BJ (cell line): ENCODE measurements at regions of chr3 and their contacts with region 1.

Region 1: GRCh38 chr3:8416965-8417364 is 84.7 kb upstream of the LMCD1 start:
- DNase-seq: no peak
- H3K4me3 ChIP-seq: no peak overlapping the region
- H3K27me3 ChIP-seq: no peaks in the 10 kb centered on the region
- CTCF ChIP-seq: no peak

Region 2: GRCh38 chr3:8239718-8240695 is 177.0 kb before region 1 on chr3:
- CTCF ChIA-PET with region 1: interaction called, 12 read pairs
- POLR2A ChIA-PET with region 1: no interaction called
- DNase-seq: no peak
- H3K4me3 ChIP-seq: no peak overlapping the region
- H3K27me3 ChIP-seq: no peaks in the 10 kb centered on the region
- CTCF ChIP-seq: peak; percentile 94

Region 3: GRCh38 chr3:8324740-8325139 is 92.2 kb before region 1 on chr3:
- CTCF ChIA-PET with region 1: interaction called, 19 read pairs
- POLR2A ChIA-PET with region 1: no interaction called
- DNase-seq: no peak
- H3K4me3 ChIP-seq: no peak overlapping the region
- H3K27me3 ChIP-seq: 0 out of 2 replicates have a peak, but pooled peaks cover 4% of the 10 kb centered on the region
- CTCF ChIP-seq: peak; percentile 54

Region 4: GRCh38 chr3:8436718-8437184 is 19.8 kb after region 1 on chr3:
- CTCF ChIA-PET with region 1: interaction called, 15 read pairs
- POLR2A ChIA-PET with region 1: no interaction called
- DNase-seq: no peak
- H3K4me3 ChIP-seq: no peak overlapping the region
- H3K27me3 ChIP-seq: peaks cover 8% of the 10 kb centered on the region
- CTCF ChIP-seq: no peak